ENCODE measurements at regions of chr2 and their contacts with region 1.

Region 1: GRCh38 chr2:190343500-190344275 is at the start of gene INPP1:
- DNase-seq: peak; percentile 63
- H3K4me3 Mint-ChIP-seq: peak within 1 kb of the TSS; percentile 86
- H3K27ac Mint-ChIP-seq: peak within 1 kb of the TSS; percentile 74
- H3K4me1 Mint-ChIP-seq: peaks cover 11% of the 10 kb centered on the region
- H3K27me3 Mint-ChIP-seq: no peaks in the 10 kb centered on the region
- CTCF ChIP-seq: no peak
- total RNA-seq, gene INPP1: 24.8 and 29.2 TPM in 2 replicates

Region 2: DNA sequence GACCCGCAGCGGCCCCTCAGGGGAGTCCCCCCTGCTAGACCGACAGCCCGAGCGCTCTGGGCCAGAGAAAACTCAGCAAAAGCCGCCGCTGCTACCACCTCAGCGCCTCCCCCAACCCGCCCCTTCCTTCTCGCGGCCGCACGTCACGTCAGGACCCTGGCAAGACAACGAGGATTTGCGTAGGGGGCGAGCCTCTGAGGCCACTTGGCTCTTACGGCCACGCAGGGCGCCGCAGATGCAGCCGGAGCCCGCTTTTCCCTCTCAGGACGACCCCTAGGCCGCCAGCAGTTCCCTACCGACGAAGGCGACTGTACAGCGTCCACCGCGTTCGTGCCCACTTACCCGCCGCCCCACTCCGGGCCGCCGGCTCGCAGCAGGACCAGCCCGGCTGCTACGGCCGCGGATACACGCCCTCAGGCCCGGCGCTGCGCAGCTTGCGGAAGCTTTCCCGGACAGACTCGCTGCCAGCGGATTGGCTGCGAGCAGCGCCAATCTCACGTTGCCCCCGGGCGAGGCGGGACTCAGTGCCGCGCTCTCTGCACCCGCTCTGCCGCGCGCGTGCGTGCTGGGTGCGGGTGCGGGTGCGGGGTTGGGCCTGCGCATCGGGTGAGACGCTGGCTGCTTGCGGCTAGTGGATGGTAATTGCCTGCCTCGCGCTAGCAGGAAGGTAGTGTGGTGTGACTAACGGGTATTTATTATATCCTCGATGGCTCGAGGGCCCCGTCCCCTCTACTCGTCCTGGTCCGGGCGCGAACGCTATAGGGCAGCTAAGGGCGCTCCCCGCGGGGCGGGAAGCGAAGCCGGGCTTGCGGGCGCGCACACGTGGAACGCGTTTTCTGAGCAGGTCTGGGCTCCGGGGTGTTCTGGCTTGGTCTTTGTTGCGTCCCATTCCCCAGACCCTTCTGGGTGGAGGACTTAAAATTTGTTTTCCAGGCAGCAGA is 559.5 kb before region 1 on chr2 and contains the starts of genes ORMDL1 and PMS1:
- CTCF ChIA-PET with region 1: no interaction called
- POLR2A ChIA-PET with region 1: no interaction called
- intact Hi-C with region 1: no loop called
- DNase-seq: peak; percentile 94
- H3K4me3 Mint-ChIP-seq: peak within 1 kb of the TSS; percentile 90
- H3K27ac Mint-ChIP-seq: peak within 1 kb of the TSS; percentile 73
- H3K4me1 Mint-ChIP-seq: peaks cover 41% of the 10 kb centered on the region
- H3K27me3 Mint-ChIP-seq: no peaks in the 10 kb centered on the region
- CTCF ChIP-seq: no peak
- total RNA-seq, gene ORMDL1: 83.0 and 85.1 TPM in 2 replicates
- total RNA-seq, gene PMS1: 38.3 and 50.9 TPM in 2 replicates

Region 3: GRCh38 chr2:190119257-190119656 is 224.4 kb before region 1 on chr2:
- CTCF ChIA-PET with region 1: no interaction called
- POLR2A ChIA-PET with region 1: no interaction called
- intact Hi-C with region 1: no loop called
- DNase-seq: no peak
- H3K4me3 Mint-ChIP-seq: no peak overlapping the region
- H3K27ac Mint-ChIP-seq: no peak overlapping the region
- H3K4me1 Mint-ChIP-seq: no peaks in the 10 kb centered on the region
- H3K27me3 Mint-ChIP-seq: no peaks in the 10 kb centered on the region
- CTCF ChIP-seq: no peak

Region 4: GRCh38 chr2:190319555-190320498 is 23.9 kb before region 1 on chr2 and contains the start of gene HIBCH:
- CTCF ChIA-PET with region 1: interaction called, 11 read pairs
- POLR2A ChIA-PET with region 1: interaction called, 44 read pairs
- intact Hi-C with region 1: loop called (anchors 2 kb)
- DNase-seq: peak; percentile 99
- H3K4me3 Mint-ChIP-seq: peak within 1 kb of the TSS; percentile 87
- H3K27ac Mint-ChIP-seq: peak within 1 kb of the TSS; percentile 78
- H3K4me1 Mint-ChIP-seq: peaks cover 35% of the 10 kb centered on the region
- H3K27me3 Mint-ChIP-seq: no peaks in the 10 kb centered on the region
- CTCF ChIP-seq: peak; percentile 56
- total RNA-seq, gene HIBCH: 14.7 and 16.2 TPM in 2 replicates

Region 5: GRCh38 chr2:190360561-190360960 is 16.9 kb after region 1 on chr2:
- CTCF ChIA-PET with region 1: interaction called, 34 read pairs
- POLR2A ChIA-PET with region 1: interaction called, 54 read pairs
- intact Hi-C with region 1: no loop called
- DNase-seq: no peak
- H3K4me3 Mint-ChIP-seq: no peak overlapping the region
- H3K27ac Mint-ChIP-seq: no peak overlapping the region
- H3K4me1 Mint-ChIP-seq: peaks cover 20% of the 10 kb centered on the region
- H3K27me3 Mint-ChIP-seq: no peaks in the 10 kb centered on the region
- CTCF ChIP-seq: no peak

Region 6: DNA sequence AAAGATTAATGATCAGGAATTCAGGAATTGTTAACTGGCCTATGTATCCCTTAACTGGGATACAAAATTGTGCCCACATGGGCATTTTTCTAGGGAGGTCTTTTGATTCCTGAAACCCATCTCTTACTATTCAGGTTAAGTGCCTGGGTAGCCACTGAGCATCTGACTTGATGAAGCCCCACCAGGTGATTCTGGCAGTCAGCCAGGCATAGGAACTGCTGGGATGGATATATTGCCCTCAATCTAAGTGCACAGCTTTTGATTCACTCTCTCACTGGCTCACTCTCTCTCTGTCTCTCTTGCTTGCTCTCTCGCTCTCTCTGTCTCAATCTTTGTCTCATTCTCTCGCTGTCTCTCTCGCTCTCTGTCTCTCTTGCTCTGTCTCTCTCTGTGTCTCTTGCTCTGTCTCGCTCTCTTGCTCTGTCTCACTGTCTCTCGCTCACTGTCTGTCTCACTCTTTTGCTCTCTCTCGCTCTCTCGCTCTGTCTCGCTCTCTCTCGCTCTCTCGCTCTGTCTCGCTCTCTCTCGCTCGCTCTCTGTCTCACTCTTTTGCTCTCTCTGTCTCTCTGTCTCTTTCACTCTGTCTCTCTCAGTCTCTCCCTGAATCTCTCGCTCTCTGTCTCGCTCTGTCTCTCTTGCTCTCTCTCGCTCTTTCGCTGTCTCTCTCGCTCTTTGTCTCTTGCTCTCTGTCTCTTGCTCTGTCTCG is 22.0 kb after region 1 on chr2:
- CTCF ChIA-PET with region 1: interaction called, 28 read pairs
- POLR2A ChIA-PET with region 1: interaction called, 45 read pairs
- intact Hi-C with region 1: no loop called
- DNase-seq: no peak
- H3K4me3 Mint-ChIP-seq: no peak overlapping the region
- H3K27ac Mint-ChIP-seq: no peak overlapping the region
- H3K4me1 Mint-ChIP-seq: no peaks in the 10 kb centered on the region
- H3K27me3 Mint-ChIP-seq: no peaks in the 10 kb centered on the region
- CTCF ChIP-seq: no peak

Region 7: GRCh38 chr2:190376591-190377245 is 33.0 kb after region 1 on chr2:
- CTCF ChIA-PET with region 1: interaction called, 17 read pairs
- POLR2A ChIA-PET with region 1: no interaction called
- intact Hi-C with region 1: loop called (anchors 1 kb)
- DNase-seq: no peak
- H3K4me3 Mint-ChIP-seq: no peak overlapping the region
- H3K27ac Mint-ChIP-seq: no peak overlapping the region
- H3K4me1 Mint-ChIP-seq: no peaks in the 10 kb centered on the region
- H3K27me3 Mint-ChIP-seq: no peaks in the 10 kb centered on the region
- CTCF ChIP-seq: no peak

Region 8: DNA sequence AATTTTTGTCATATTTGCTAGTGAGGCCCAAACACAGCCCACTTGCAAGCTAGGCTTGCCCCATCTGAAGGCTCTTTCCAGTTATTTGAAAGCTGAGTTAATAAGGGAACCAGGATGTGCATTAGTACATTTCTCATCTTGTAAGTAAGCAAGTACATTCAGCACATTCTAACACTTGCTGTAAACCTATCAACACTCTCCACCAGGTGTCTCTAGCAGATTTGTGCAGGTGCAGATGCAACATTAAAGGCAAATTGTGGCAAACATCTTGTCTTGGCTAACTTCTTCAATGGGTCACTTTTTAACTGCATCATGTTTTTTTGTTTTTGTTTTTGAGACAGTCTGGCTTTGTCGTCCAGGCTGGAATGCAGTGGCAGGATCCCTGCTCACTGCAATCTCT is 39.2 kb after region 1 on chr2:
- CTCF ChIA-PET with region 1: interaction called, 12 read pairs
- POLR2A ChIA-PET with region 1: no interaction called
- intact Hi-C with region 1: no loop called
- DNase-seq: peak; percentile 78
- H3K4me3 Mint-ChIP-seq: no peak overlapping the region
- H3K27ac Mint-ChIP-seq: no peak overlapping the region
- H3K4me1 Mint-ChIP-seq: peaks cover 6% of the 10 kb centered on the region
- H3K27me3 Mint-ChIP-seq: no peaks in the 10 kb centered on the region
- CTCF ChIP-seq: peak; percentile 50

Region 9: DNA sequence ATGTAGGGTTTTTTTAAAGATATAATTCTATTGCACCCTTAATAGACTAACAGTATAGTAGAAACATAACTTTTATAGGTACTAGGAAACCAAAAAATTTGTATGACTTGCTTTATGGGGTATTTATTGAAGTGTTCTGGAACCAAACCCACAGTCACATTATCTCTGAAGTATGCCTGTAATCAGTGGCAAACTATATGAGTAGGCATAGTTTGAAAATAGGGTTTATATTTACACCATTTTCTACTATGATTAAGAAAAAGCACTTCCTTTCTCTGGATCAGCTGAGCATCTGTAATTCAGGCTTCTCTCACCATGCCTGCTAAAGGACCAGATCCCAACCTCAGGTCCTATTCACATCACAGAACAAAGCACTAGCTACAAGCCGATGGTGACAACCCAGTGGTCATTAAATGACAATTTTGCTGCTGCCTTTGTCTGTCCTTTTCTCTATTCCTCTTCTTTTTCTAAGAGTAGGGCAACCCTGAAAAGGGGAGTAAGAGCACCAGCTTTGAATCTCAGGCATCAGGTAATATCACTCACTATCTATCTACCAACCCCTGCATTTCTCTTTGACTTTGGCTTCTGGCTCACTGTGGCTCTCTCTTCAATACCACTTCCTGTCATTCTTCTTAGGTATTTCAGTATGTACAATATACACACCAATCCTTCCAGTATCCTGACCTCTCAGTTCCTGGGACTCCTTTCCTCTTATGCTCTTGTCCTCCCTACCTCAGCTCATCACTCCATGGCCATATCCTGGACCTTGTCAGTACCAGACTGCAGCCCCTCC is 176.5 kb after region 1 on chr2:
- CTCF ChIA-PET with region 1: no interaction called
- POLR2A ChIA-PET with region 1: no interaction called
- intact Hi-C with region 1: no loop called
- DNase-seq: no peak
- H3K4me3 Mint-ChIP-seq: no peak overlapping the region
- H3K27ac Mint-ChIP-seq: no peak overlapping the region
- H3K4me1 Mint-ChIP-seq: peaks cover 16% of the 10 kb centered on the region
- H3K27me3 Mint-ChIP-seq: no peaks in the 10 kb centered on the region
- CTCF ChIP-seq: no peak

Region 10: DNA sequence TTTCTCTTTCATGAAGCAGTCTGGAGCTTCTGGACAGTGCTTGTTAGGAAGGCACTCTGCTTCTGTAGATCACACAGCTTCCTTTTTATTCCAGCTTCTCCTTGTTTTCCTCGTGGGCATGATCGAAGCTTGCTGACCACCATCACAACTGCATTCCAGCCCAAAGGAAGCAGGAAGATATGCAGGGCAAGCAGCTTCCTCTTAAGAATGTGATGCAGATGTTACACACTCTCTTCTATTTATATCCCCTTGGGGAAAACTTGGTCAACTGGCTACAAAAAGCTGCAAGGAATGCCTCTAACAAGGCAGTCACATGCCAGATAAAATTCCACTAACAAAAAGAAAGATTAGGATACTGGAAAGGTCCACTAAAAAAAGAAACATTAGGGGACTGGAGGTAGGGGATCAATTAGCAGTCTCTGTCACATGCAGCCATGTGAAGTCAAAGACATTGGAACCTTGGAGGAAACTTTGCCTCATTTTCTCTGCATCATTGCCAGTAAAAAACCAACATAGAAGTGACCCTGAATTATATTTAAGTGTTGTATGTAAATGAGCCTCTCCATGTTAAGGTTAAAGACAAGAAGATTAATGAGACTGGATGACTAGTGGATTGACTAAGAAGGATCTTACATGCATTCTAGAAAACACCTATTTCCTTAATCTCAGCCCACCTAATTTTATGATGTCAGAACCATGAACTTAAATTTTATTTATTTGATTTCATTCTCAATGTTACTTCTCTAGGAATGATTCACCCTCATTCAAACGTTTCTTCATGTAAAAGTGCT is 403.5 kb after region 1 on chr2:
- CTCF ChIA-PET with region 1: no interaction called
- POLR2A ChIA-PET with region 1: no interaction called
- intact Hi-C with region 1: no loop called
- DNase-seq: no peak
- H3K4me3 Mint-ChIP-seq: no peak overlapping the region
- H3K27ac Mint-ChIP-seq: no peak overlapping the region
- H3K4me1 Mint-ChIP-seq: no peaks in the 10 kb centered on the region
- H3K27me3 Mint-ChIP-seq: no peaks in the 10 kb centered on the region
- CTCF ChIP-seq: no peak